Cardiac septum (tissue), 1 donor: ENCODE measurements at regions of chr1 and their contacts with region 1.

Region 1: DNA sequence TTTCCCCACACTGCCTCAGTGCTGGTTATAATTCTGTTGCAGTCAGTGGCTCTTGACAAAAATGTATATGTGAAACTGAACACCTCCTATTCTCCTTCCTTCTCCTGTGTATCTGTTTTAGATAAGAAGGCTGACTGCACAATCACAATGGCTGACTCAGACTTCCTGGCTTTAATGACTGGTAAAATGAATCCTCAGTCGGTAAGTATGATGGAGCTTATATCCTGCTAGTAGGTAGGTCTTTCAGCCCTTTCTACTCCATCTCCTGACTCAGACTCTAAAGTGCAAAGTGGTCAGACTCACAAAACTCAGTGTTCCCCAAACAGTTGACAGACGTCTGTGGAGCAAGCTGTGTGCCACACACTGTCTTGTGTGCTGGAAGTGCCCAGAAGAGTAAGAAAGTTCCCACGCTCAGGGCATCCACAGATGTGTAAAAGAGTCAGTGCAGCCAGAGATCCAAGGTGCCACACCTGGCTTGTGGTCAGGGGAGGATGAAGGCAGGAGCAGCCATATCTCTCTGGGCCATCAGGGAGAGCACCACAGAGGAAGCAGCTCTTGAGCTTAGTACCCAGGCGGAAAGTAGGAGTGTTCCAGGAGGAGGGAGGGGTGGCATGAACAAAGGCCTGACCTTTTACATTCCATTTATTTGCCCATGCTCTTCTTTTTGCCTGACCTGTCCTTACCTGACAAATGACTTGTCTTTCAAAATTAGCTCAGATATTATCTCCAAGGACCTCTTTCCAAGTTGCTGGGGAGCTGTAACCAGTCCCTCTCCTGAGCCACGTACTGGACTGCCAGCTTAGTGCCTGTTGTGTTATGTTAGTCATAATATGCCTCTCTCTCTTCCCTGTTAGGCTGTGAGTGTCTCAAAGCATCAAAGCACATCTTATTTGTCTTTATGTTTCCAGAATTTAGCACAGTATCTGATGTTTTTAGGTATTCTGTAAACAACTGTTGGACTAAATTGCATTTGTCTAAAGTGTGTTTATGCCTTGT is 14.0 kb upstream of the PODN start:
- DNase-seq: no peak

Region 2: GRCh38 chr1:53014791-53015507 is 33.1 kb before region 1 on chr1:
- intact Hi-C with region 1: loop called (anchors 2 kb)
- DNase-seq: peak; percentile 87

Region 3: DNA sequence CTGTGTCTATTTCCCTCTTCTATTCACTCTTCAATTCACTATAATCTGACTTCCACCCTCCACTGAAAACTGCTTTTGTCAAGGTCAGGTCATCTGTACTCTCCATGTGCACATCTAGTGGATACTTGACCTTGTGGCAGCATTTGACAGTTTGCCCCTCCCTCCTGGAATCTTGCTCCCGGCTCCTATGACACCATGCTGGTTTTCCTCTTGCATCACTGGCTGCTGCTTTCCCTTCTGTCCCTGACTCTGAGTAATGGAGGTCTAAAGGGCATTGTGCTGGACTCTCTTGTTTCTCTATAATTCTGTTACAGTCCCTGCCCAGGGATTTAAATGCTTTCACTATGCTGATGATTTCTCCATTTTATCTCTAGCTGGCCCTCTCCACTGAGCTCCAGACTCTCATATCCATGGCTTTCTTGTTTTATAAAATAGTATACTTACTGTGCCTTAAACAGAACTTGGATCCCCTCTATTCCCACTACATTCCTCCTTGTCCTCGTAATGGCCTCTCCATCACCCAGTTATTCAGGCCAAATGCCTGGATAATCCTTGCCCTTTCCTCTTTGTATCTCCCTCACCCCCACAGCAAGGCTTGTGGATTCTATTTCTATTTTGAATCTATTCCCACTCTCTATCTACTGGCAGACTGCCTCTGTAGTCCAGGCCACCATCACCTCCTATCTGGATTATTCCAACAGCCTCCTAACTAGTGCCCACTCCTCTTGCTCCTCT is 22.8 kb before region 1 on chr1:
- intact Hi-C with region 1: loop called (anchors 1 kb)
- DNase-seq: no peak